WTC11 (cell line): ENCODE measurements at regions of chr17 and their contacts with region 1.

Region 1: DNA sequence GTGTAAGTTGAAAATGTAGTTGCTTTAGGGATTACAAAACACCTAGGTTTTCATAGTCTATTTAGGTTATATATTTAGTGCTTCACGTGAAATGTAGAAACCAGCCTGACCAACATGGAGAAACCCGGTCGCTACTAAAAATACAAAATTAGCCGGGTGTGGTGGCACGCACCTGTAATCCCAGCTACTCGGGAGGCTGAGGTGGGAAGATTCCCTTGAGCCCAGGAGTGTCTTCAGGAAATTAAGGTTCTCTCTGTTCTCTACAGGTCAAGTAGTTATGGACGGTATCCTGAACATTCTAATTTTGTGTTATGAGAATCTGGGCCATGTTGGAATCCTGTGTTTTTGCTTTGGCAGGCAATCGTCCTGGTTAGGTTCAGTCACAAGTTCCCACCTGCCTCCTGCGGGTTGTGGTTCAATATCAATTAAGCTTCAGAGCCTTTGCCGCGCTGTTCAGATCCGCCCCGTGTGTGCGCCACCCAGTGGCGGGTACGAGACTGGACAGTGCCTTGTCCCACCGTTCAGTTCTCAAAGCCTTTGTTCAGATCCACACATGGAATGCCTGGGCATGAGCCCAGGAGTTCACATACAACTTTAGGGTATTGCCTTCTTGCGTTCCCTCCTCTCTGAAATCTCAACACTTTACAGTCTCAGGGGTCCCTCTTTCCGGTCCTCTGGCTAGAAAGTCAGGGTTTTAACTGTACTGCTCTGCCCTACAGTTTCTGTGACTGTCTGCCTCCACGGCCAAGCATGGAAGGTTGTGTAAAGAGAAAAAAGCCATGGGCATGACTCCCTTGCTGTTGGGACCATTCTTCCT is 41.7 kb downstream of the HEATR6 start:
- DNase-seq: peak; percentile 78
- ATAC-seq: peak; percentile 96
- H3K4me3 Mint-ChIP-seq: no peak overlapping the region
- H3K27ac Mint-ChIP-seq: peak overlapping the region; percentile 9; the same call in 1 of the 2 replicates
- H3K4me1 Mint-ChIP-seq: peaks cover 3% of the 10 kb centered on the region; the same call in 1 of the 2 replicates
- H3K27me3 Mint-ChIP-seq: peaks cover 4% of the 10 kb centered on the region; the same call in 1 of the 2 replicates
- CTCF ChIP-seq: peak; percentile 76

Region 2: GRCh38 chr17:59707114-59707970 is 329.7 kb before region 1 on chr17 and contains the starts of genes PTRH2 and VMP1:
- CTCF ChIA-PET with region 1: interaction called, 12 read pairs
- POLR2A ChIA-PET with region 1: no interaction called
- DNase-seq: peak; percentile 98
- ATAC-seq: peak; percentile 99
- H3K4me3 Mint-ChIP-seq: peak within 1 kb of the TSS; percentile 98
- H3K27ac Mint-ChIP-seq: peak within 1 kb of the TSS; percentile 98
- H3K4me1 Mint-ChIP-seq: peaks cover 30% of the 10 kb centered on the region
- H3K27me3 Mint-ChIP-seq: no peaks in the 10 kb centered on the region
- CTCF ChIP-seq: no peak
- total RNA-seq, gene PTRH2: 30.0 to 32.6 TPM (median 30.5 TPM) in 3 replicates
- total RNA-seq, gene VMP1: 72.8 to 79.1 TPM (median 72.9 TPM) in 3 replicates

Region 3: GRCh38 chr17:59837308-59838051 is 199.5 kb before region 1 on chr17:
- CTCF ChIA-PET with region 1: interaction called, 5 read pairs
- POLR2A ChIA-PET with region 1: interaction called, 10 read pairs
- DNase-seq: peak; percentile 54
- ATAC-seq: peak; percentile 87
- H3K4me3 Mint-ChIP-seq: peak overlapping the region; percentile 94
- H3K27ac Mint-ChIP-seq: peak overlapping the region; percentile 99
- H3K4me1 Mint-ChIP-seq: peaks cover 49% of the 10 kb centered on the region
- H3K27me3 Mint-ChIP-seq: no peaks in the 10 kb centered on the region
- CTCF ChIP-seq: no peak

Region 4: DNA sequence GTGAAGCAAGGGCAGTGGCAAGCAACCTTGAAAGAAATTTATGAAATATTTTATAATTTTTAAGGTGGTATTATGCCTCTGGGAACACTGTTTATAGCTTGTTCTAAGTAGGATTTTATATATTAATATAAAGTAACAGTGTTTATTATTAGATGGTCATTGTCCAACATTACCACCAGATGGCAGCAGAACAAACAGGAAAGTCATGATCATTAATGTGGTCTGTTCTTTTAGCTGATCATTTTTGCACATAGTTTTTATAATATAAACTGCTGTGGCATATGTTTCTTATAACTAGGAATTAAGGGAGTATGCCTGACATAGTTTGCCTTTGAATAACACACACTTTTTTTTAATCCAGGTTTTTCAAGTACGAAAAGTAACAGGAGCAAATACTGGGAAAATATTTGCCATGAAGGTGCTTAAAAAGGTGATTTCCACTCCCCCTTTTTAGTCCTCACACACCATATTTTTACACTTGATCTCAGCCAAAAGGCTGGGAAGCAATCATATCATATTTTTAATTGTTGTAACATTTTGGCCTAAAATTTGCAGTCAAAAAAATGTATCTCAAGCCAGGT is 122.6 kb before region 1 on chr17:
- CTCF ChIA-PET with region 1: interaction called, 32 read pairs
- POLR2A ChIA-PET with region 1: no interaction called
- DNase-seq: no peak
- ATAC-seq: no peak
- H3K4me3 Mint-ChIP-seq: no peak overlapping the region
- H3K27ac Mint-ChIP-seq: no peak overlapping the region
- H3K4me1 Mint-ChIP-seq: no peaks in the 10 kb centered on the region
- H3K27me3 Mint-ChIP-seq: no peaks in the 10 kb centered on the region
- CTCF ChIP-seq: peak; percentile 34

Region 5: GRCh38 chr17:59964482-59965328 is 72.3 kb before region 1 on chr17 and contains the start of gene RNFT1:
- CTCF ChIA-PET with region 1: interaction called, 22 read pairs
- POLR2A ChIA-PET with region 1: no interaction called
- DNase-seq: peak; percentile 86
- ATAC-seq: peak; percentile 92
- H3K4me3 Mint-ChIP-seq: peak within 1 kb of the TSS; percentile 79
- H3K27ac Mint-ChIP-seq: peak within 1 kb of the TSS; percentile 67; the same call in 1 of the 2 replicates
- H3K4me1 Mint-ChIP-seq: peaks cover 11% of the 10 kb centered on the region
- H3K27me3 Mint-ChIP-seq: peaks cover 25% of the 10 kb centered on the region
- CTCF ChIP-seq: no peak
- total RNA-seq, gene RNFT1: 4.0 to 4.9 TPM (median 4.8 TPM) in 3 replicates

Region 6: DNA sequence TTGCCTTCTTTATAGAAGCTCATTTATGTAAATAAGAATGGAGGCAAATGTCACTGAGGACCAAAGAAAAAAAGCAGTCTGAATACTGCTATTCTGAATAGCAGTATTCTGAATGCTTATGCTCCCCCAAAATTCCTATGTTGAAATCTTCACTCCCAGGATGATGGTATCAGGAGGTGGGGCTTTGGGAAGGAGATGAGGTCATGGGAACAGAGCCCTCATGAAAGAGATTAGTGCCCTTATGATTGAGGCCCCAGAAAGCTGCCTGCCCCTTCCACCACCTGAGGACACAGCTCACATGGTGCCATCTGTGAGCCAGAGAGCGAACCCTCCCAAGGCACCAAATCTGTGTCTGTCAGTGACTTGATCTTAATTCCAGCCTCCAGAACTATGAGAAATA is 12.9 kb after region 1 on chr17:
- CTCF ChIA-PET with region 1: interaction called, 18 read pairs
- POLR2A ChIA-PET with region 1: no interaction called
- DNase-seq: no peak
- ATAC-seq: no peak
- H3K4me3 Mint-ChIP-seq: no peak overlapping the region
- H3K27ac Mint-ChIP-seq: no peak overlapping the region
- H3K4me1 Mint-ChIP-seq: no peaks in the 10 kb centered on the region
- H3K27me3 Mint-ChIP-seq: no peaks in the 10 kb centered on the region
- CTCF ChIP-seq: no peak

Region 7: GRCh38 chr17:60077672-60078519 is 40.9 kb after region 1 on chr17:
- CTCF ChIA-PET with region 1: interaction called, 12 read pairs
- POLR2A ChIA-PET with region 1: no interaction called
- DNase-seq: no peak
- ATAC-seq: peak; percentile 32
- H3K4me3 Mint-ChIP-seq: peak overlapping the region; percentile 97
- H3K27ac Mint-ChIP-seq: peak overlapping the region; percentile 93
- H3K4me1 Mint-ChIP-seq: peaks cover 16% of the 10 kb centered on the region
- H3K27me3 Mint-ChIP-seq: no peaks in the 10 kb centered on the region
- CTCF ChIP-seq: no peak